Calu3 (cell line): ENCODE measurements at regions of chr17 and their contacts with region 1.

Region 1: DNA sequence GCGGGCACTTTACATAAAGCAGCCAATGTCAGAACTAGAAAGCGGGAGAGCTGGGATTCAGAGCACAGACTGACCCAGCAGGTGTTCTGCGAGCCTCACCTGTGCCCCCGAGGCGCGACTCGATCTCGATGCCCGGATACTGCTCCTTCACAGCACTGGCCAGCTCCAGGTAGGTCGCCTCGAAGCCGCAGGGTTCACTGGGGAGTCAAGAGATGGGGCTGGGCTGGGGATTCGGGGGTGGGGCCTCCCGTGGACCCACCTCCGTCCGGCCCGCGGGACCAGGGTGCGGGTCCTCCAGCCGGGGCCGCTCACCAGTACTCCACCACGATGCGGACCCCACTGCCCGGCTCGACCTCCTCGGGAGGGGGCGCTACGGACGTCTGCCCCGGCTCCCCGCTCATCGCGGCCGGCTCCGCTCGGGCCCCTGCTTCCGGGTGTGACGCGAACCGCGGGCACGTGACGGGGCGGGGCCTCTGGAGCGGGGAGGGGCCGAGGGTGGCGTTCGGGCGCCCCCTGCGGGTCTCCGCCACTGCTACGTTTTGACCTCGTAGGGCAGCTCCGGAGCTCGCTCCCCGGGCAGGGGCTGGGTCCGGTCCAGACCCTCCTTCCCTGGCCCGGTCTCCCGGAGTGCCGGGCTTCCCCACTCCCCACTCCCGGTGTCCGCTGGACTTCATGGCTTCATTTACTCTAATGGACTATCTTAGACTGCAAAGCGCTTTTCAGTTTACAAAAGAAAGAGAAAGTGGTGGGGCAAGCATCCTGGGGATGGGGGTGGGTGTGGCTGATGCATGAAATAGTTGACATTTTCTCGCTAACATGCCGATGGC is at the start of gene MIEN1:
- DNase-seq: no peak
- H3K4me3 Mint-ChIP-seq: peak within 1 kb of the TSS; percentile 79
- H3K27ac Mint-ChIP-seq: peak within 1 kb of the TSS; percentile 90
- H3K4me1 Mint-ChIP-seq: peaks cover 34% of the 10 kb centered on the region
- H3K27me3 Mint-ChIP-seq: no peaks in the 10 kb centered on the region
- CTCF ChIP-seq: no peak
- total RNA-seq, gene MIEN1: 2,121 and 2,217 TPM in 2 replicates

Region 2: DNA sequence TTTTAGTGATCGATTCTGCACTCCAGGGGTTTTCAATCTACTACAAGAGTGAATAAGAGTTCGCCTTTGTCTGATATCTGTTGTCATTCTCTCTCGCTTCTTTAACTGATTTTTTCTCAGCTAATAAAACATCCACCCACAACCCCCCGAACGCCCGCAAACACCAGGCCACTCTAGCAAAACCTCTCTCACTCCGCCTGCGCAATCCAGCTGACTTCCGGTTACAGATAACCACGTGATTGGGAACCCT is 530.6 kb before region 1 on chr17:
- CTCF ChIA-PET with region 1: no interaction called
- intact Hi-C with region 1: no loop called
- DNase-seq: peak; percentile 99
- H3K4me3 Mint-ChIP-seq: peak overlapping the region; percentile 86
- H3K27ac Mint-ChIP-seq: peak overlapping the region; percentile 99
- H3K4me1 Mint-ChIP-seq: peaks cover 41% of the 10 kb centered on the region
- H3K27me3 Mint-ChIP-seq: no peaks in the 10 kb centered on the region
- CTCF ChIP-seq: no peak

Region 3: GRCh38 chr17:39450847-39451581 is 279.3 kb before region 1 on chr17 and contains the start of gene MED1:
- CTCF ChIA-PET with region 1: interaction called, 10 read pairs
- intact Hi-C with region 1: no loop called
- DNase-seq: peak; percentile 100
- H3K4me3 Mint-ChIP-seq: peak within 1 kb of the TSS; percentile 94
- H3K27ac Mint-ChIP-seq: peak within 1 kb of the TSS; percentile 98
- H3K4me1 Mint-ChIP-seq: peaks cover 26% of the 10 kb centered on the region
- H3K27me3 Mint-ChIP-seq: no peaks in the 10 kb centered on the region
- CTCF ChIP-seq: no peak
- total RNA-seq, gene MED1: 227 and 230 TPM in 2 replicates

Region 4: DNA sequence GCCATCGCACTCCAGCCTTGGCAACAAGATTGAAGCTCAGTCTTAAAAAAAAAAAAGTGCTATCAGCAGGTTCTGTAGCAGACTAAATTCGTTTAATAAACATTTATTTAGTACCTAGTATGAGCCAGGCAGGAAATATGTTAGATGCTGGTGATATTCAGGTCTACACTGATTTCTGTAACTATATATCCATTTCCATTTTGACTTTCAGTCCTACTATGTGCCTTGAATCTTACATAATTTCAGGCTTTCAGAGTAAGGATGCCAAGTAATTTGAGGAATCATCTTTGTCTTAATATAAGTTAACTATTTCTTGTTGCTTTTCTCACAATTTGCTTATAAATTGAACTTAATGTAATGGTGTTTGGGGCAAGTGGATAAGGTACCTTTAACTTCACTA is 222.8 kb before region 1 on chr17:
- CTCF ChIA-PET with region 1: no interaction called
- intact Hi-C with region 1: no loop called
- DNase-seq: no peak
- H3K4me3 Mint-ChIP-seq: no peak overlapping the region
- H3K27ac Mint-ChIP-seq: no peak overlapping the region
- H3K4me1 Mint-ChIP-seq: no peaks in the 10 kb centered on the region
- H3K27me3 Mint-ChIP-seq: no peaks in the 10 kb centered on the region
- CTCF ChIP-seq: no peak

Region 5: GRCh38 chr17:39687811-39688518 is 42.3 kb before region 1 on chr17 and contains the start of gene PGAP3:
- CTCF ChIA-PET with region 1: interaction called, 34,714 read pairs
- intact Hi-C with region 1: loop called (anchors 1 kb)
- DNase-seq: peak; percentile 100
- H3K4me3 Mint-ChIP-seq: peak within 1 kb of the TSS; percentile 64
- H3K27ac Mint-ChIP-seq: peak within 1 kb of the TSS; percentile 63
- H3K4me1 Mint-ChIP-seq: peaks cover 27% of the 10 kb centered on the region
- H3K27me3 Mint-ChIP-seq: no peaks in the 10 kb centered on the region
- CTCF ChIP-seq: no peak
- total RNA-seq, gene PGAP3: 1,186 and 1,276 TPM in 2 replicates

Region 6: GRCh38 chr17:39808409-39808997 is 78.2 kb after region 1 on chr17:
- CTCF ChIA-PET with region 1: interaction called, 117 read pairs
- intact Hi-C with region 1: no loop called
- DNase-seq: peak; percentile 98
- H3K4me3 Mint-ChIP-seq: peak overlapping the region; percentile 1
- H3K27ac Mint-ChIP-seq: peak overlapping the region; percentile 16
- H3K4me1 Mint-ChIP-seq: peaks cover 37% of the 10 kb centered on the region
- H3K27me3 Mint-ChIP-seq: no peaks in the 10 kb centered on the region
- CTCF ChIP-seq: no peak

Region 7: DNA sequence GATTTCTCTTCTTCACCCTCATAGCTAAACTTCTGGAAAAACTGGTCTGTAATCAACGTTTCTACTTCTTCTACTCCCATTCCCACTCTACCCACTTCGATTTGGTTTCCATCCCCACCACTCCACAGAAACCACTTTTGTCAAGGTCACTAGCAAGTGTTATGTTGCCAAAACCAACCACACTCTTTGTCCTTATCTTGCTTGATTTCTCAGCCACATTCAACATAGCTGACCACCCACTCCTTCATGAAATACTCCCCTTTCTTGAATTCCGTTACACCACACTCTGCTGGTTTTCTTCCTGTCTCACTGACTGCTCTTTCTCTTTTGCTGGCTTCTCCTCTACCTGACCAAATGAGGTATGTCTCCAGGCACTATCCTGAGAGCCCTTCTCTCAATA is 121.9 kb after region 1 on chr17:
- CTCF ChIA-PET with region 1: interaction called, 217 read pairs
- intact Hi-C with region 1: no loop called
- DNase-seq: peak; percentile 59
- H3K4me3 Mint-ChIP-seq: no peak overlapping the region
- H3K27ac Mint-ChIP-seq: no peak overlapping the region
- H3K4me1 Mint-ChIP-seq: peaks cover 10% of the 10 kb centered on the region
- H3K27me3 Mint-ChIP-seq: no peaks in the 10 kb centered on the region
- CTCF ChIP-seq: no peak

Region 8: DNA sequence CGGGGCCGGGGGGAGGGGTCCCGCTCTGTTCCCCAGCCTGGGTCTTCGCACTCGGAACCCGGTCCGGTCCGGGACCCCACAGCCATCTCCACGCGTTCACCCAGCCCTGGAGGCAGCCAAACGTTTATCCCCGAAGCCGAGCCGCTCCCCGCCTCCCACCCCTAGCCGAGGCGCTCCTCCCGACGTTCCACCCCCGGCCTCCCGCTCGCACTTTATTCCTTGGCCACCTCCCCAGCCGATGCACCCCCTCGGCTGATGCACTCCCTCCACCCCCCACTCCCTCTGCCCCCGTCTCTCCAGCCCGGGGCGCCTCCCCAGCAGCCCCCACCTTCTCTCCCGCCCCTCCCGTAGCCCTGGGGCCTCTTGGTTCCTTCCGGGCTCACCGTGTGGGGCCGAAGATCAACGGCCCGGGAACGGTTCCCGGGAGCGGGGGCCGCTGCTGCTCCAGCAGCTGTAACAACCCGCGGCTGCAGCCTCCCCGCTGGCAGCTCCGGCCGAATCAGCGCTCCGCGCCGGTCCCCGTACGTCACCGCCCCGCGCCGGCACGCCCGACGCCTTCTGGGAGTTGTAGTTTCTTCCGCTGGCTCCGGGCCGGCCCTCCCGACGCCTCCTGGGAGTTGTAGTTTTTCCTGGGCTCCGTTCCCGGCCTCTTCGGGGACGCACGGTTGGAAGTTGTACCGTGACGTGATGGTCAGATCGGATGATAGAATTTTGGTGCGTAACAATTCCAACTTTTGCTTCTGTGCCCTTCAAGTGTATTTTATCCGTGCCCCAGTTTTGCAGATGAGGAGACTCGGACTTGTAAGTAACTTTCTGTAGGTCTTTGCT is 197.0 kb after region 1 on chr17 and contains the starts of genes LRRC3C and ORMDL3:
- CTCF ChIA-PET with region 1: interaction called, 275 read pairs
- intact Hi-C with region 1: no loop called
- DNase-seq: no peak
- H3K4me3 Mint-ChIP-seq: peak within 1 kb of the TSS; percentile 74
- H3K27ac Mint-ChIP-seq: peak within 1 kb of the TSS; percentile 66
- H3K4me1 Mint-ChIP-seq: peaks cover 60% of the 10 kb centered on the region
- H3K27me3 Mint-ChIP-seq: no peaks in the 10 kb centered on the region
- CTCF ChIP-seq: no peak
- total RNA-seq, gene LRRC3C: not detected in 2 replicates
- total RNA-seq, gene ORMDL3: 1,738 and 1,968 TPM in 2 replicates

Region 9: DNA sequence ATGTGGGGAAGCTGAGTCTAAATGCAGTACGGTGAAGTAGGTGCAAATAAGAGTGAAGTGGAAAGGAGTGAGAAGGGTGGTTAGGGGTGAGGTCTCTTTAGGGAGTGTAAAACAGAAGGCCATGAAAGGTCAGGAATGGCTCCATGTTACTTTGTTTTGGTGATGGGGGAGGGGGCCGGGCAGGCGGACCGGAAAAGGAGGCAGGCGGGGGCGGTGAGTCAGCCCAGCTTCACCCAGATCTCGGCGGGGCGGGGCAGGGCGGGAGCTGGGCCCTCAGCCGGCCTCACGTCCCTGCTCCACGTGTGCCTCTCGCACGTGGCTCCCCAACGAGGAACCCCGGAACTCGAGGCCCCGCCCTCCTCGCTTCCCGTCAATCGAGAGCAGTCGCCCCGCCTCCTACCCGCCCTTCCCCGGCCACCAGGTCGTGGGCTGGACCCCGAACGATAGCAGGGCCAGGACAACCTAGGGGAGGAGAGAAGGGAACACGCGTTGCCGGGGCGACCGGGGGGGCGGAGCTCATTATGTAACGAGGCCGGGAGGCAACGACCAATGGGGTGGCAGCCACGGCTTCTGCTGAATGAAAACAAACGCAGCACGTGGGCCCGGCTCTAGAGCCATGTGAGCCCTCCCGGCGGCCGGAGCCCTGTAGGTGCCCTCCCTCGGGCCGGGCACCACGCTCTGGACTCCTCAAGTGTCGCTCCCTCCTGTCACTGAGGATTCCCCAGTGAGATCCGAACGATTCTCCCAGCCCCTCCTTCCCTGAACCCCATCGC is 368.7 kb after region 1 on chr17:
- CTCF ChIA-PET with region 1: interaction called, 17 read pairs
- intact Hi-C with region 1: no loop called
- DNase-seq: peak; percentile 100
- H3K4me3 Mint-ChIP-seq: peak overlapping the region; percentile 80
- H3K27ac Mint-ChIP-seq: peak overlapping the region; percentile 85
- H3K4me1 Mint-ChIP-seq: peaks cover 73% of the 10 kb centered on the region
- H3K27me3 Mint-ChIP-seq: no peaks in the 10 kb centered on the region
- CTCF ChIP-seq: no peak

Region 10: GRCh38 chr17:40203131-40203530 is 472.8 kb after region 1 on chr17:
- CTCF ChIA-PET with region 1: no interaction called
- intact Hi-C with region 1: no loop called
- DNase-seq: no peak
- H3K4me3 Mint-ChIP-seq: no peak overlapping the region
- H3K27ac Mint-ChIP-seq: no peak overlapping the region
- H3K4me1 Mint-ChIP-seq: peaks cover 7% of the 10 kb centered on the region
- H3K27me3 Mint-ChIP-seq: no peaks in the 10 kb centered on the region
- CTCF ChIP-seq: no peak